HEK293T (cell line): ENCODE measurements at regions of chr5 and their contacts with region 1.

Region 1: GRCh38 chr5:112757468-112758208 is 20.0 kb downstream of the APC start:
- DNase-seq: peak; percentile 46

Region 2: DNA sequence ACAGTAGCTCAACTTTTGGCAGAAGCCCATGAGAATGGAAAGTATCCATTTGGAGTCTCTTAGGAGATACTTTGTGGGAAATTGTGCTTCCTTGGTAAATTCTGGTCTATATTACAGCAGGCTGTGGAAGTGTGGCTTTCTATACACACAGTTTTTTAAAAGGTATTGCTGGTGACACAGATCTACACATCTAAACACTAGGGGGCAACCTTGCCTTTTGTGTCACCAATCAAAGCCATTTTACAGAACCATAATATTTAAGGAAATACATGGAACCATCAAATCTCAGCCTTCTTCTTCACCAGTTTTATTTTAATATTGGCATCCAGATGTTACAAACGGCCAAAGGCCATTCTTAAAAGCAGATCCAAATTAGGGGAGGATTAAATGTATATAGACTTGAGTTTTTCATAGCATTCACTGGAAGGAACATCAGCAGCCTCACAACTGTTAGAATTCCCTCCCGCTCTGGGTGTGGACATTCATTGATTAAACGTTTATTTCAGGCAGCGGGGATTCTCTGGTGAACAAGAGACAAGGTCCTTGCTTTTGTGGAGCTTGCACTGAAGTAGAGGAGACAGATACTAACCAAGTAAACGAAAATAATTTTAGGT is 206.1 kb before region 1 on chr5:
- CTCF ChIA-PET with region 1: interaction called, 37 read pairs
- POLR2A ChIA-PET with region 1: no interaction called
- DNase-seq: peak; percentile 44

Region 3: GRCh38 chr5:112691758-112692157 is 65.9 kb before region 1 on chr5:
- CTCF ChIA-PET with region 1: interaction called, 38 read pairs
- POLR2A ChIA-PET with region 1: no interaction called
- DNase-seq: peak; percentile 52

Region 4: DNA sequence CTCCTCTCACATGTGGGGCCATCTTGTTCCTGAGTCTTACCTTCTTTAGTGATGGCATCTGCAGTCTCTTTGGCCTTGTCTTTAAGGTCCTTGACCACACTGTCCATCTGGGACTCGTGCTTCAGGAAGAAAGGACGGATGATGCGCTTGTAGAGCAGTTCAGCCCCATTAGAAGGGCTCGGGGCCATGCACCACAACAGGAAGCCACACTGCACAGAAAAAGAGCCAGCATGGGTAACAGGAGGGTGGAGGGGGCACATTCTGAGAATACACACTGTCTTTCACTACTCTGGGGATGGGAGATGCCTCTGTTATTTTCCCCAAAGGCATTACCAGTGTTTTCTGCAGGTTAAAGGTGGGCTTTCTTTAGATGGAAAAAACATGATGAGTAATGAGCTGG is 129.3 kb after region 1 on chr5:
- CTCF ChIA-PET with region 1: no interaction called
- POLR2A ChIA-PET with region 1: no interaction called
- DNase-seq: no peak